ENCODE measurements at regions of chr3 and their contacts with region 1.

Region 1: GRCh38 chr3:48652923-48653715 is 9.6 kb downstream of the CELSR3 start:
- DNase-seq: no peak
- H3K4me3 ChIP-seq: no peak overlapping the region
- H3K27ac ChIP-seq: no peak overlapping the region
- H3K4me1 ChIP-seq: peaks cover 0 to 14% (median 6%) of the 10 kb centered on the region in 4 donors
- H3K27me3 ChIP-seq: no peaks in the 10 kb centered on the region
- CTCF ChIP-seq: no peak
- EP300 ChIP-seq: no peak
- POLR2A ChIP-seq: no peak

Region 2: GRCh38 chr3:48521635-48522034 is 131.5 kb before region 1 on chr3:
- in situ Hi-C with region 1: no loop called
- intact Hi-C with region 1: loop called (anchors 1 kb)
- DNase-seq: no peak
- H3K4me3 ChIP-seq: no peak overlapping the region
- H3K27ac ChIP-seq: no peak overlapping the region
- H3K4me1 ChIP-seq: no peaks in the 10 kb centered on the region
- H3K27me3 ChIP-seq: no peaks in the 10 kb centered on the region
- CTCF ChIP-seq: no peak
- EP300 ChIP-seq: no peak
- POLR2A ChIP-seq: no peak

Measured in transverse colon (tissue), 4 donors.